Common myeloid progenitor, CD34-positive (primary cell): ENCODE measurements at regions of chr2 and their contacts with region 1.

Region 1: GRCh38 chr2:47272031-47272864 is 117.1 kb upstream of the STPG4 start:
- DNase-seq: peak; percentile 35 to 60 (median 58)
- H3K4me3 ChIP-seq: peak overlapping the region; percentile 6 to 70 (median 53)
- H3K27ac ChIP-seq: no peak overlapping the region
- H3K4me1 ChIP-seq: peaks cover 0 to 11% (median 9%) of the 10 kb centered on the region in 4 experiments
- H3K27me3 ChIP-seq: no peaks in the 10 kb centered on the region

Region 2: GRCh38 chr2:47179388-47179787 is 92.9 kb before region 1 on chr2:
- CTCF ChIA-PET with region 1: interaction called, 12 read pairs
- POLR2A ChIA-PET with region 1: interaction called, 4 read pairs
- DNase-seq: peak; percentile 14 to 71 (median 68)
- H3K4me3 ChIP-seq: no peak overlapping the region
- H3K27ac ChIP-seq: no peak overlapping the region
- H3K4me1 ChIP-seq: peaks cover 14 to 34% (median 26%) of the 10 kb centered on the region in 4 experiments
- H3K27me3 ChIP-seq: no peaks in the 10 kb centered on the region

Region 3: DNA sequence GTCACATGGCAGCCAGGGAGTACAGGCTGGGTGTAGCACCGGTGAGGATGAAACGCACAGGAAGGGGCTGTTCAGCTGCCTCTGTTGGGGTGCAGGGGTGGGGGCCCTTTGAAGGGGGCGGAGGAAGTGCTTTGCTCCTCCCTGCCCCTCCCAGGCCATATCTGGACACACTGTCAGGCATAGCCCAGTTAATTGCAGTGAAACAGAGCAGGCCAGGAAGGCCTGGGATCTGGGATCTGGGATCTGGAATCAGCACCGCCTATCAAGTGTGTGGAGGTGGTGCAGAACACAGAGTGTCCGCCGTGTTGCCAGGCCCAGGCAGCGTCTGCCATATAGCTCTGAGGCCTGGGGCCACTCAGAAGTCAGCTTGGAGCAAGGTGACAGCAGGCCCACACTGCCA is 11.4 kb after region 1 on chr2:
- CTCF ChIA-PET with region 1: interaction called, 13 read pairs
- POLR2A ChIA-PET with region 1: interaction called, 3 read pairs
- DNase-seq: no peak
- H3K4me3 ChIP-seq: no peak overlapping the region
- H3K27ac ChIP-seq: no peak overlapping the region
- H3K4me1 ChIP-seq: no peaks in the 10 kb centered on the region
- H3K27me3 ChIP-seq: no peaks in the 10 kb centered on the region